ENCODE measurements at regions of chr1 and their contacts with region 1.

Region 1: GRCh38 chr1:235043234-235043633 is 85.4 kb downstream of the TOMM20 start:
- DNase-seq: peak in 1 of 2 donors; percentile 9
- ATAC-seq: no peak
- H3K4me3 ChIP-seq: no peak overlapping the region
- H3K27ac ChIP-seq: no peak overlapping the region
- H3K4me1 ChIP-seq: no peaks in the 10 kb centered on the region
- H3K27me3 ChIP-seq: no peaks in the 10 kb centered on the region

Region 2: DNA sequence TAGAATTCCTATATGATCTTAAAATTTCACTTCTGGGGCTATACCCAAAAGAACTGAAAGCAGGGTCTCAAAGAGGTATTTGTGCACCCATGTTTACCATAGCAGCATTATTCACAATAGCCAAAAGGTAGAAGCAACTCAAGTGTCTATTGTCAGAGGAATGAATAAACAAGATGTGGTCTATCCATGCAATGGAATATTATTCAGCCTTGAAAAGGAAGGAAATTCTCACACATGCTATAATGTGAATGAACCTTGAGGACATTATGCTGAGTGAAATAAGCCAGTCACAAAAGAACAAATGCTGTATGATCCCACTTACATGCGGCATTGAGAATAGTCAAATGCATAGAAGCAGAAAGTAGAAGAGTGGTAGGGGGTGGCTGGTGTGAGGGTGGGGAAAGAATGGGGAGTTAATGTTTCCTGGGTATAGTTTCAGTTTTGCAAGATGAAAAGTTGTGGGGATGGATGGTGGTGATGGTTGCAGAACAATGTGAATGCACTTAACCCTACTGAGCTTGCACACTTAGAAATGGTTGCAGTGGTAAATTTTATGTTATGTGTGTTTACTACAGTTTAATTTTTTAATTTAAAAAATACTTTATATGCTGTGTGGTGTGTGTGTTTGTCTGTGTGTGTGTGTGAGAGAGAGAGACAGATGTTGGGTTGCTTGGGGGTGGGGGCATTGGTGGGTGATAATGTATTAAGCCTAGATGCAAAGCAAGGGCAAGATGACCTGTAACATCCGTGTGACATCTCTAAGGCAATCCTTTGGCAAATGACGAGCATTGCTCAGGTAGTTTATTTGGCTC is 36.9 kb before region 1 on chr1:
- intact Hi-C with region 1: loop called in 1 of 2 experiments (anchors 5 kb)
- DNase-seq: no peak
- ATAC-seq: no peak
- H3K4me3 ChIP-seq: no peak overlapping the region
- H3K27ac ChIP-seq: no peak overlapping the region
- H3K4me1 ChIP-seq: no peaks in the 10 kb centered on the region
- H3K27me3 ChIP-seq: no peaks in the 10 kb centered on the region